ENCODE measurements at regions of chr1 and their contacts with region 1.

Region 1: DNA sequence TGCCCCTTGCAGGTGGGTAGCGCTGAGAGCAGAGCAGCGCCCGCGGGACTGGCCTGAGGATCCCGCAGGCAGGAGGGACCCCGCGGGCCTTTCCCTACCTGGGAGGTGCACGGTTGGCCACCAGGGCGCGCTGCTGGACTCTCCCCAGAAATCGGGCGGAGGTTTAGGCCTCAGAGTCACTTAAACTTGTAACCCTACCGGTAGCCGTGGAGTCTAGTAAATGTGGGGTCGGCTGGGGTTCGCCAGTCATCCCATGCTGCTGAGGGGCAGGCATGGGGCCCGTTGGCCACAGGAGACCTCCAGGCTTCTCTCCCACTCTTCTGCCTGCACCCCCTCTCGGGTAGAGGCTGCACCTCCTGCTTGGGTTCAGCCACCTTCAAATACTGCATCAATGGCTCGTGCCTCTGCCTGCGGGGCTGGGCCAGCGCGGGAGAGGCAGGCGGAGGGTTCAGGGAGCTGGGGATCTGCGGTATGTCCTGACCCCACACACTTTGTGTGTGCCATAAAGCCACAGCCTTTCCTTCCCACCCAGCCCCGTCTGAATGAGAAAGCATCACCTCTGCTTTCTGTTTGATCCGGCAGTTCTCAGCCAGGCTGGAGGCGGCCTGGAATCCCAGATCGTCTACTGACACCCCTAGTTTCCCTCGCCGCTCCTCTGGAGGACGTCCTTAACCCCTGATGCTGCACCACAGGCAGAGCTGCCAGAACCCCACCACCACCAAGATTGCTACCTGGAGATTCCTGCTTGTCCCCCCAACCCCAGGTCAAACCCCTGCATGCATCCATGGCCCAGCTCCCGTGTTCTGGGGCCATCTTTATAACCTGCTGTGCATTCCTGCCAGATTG is 12.3 kb upstream of the GSTM4 start:
- DNase-seq: peak; percentile 94
- H3K4me3 Mint-ChIP-seq: no peak overlapping the region
- H3K27ac Mint-ChIP-seq: no peak overlapping the region
- H3K4me1 Mint-ChIP-seq: peaks cover 5% of the 10 kb centered on the region
- H3K27me3 Mint-ChIP-seq: no peaks in the 10 kb centered on the region

Region 2: GRCh38 chr1:108963052-108963686 is 680.4 kb before region 1 on chr1 and contains the start of gene CLCC1:
- CTCF ChIA-PET with region 1: no interaction called
- intact Hi-C with region 1: no loop called
- DNase-seq: peak; percentile 96
- H3K4me3 Mint-ChIP-seq: peak within 1 kb of the TSS; percentile 88
- H3K27ac Mint-ChIP-seq: peak within 1 kb of the TSS; percentile 87
- H3K4me1 Mint-ChIP-seq: peaks cover 26% of the 10 kb centered on the region
- H3K27me3 Mint-ChIP-seq: no peaks in the 10 kb centered on the region
- total RNA-seq, gene CLCC1: 14.3 to 15.2 TPM

Region 3: DNA sequence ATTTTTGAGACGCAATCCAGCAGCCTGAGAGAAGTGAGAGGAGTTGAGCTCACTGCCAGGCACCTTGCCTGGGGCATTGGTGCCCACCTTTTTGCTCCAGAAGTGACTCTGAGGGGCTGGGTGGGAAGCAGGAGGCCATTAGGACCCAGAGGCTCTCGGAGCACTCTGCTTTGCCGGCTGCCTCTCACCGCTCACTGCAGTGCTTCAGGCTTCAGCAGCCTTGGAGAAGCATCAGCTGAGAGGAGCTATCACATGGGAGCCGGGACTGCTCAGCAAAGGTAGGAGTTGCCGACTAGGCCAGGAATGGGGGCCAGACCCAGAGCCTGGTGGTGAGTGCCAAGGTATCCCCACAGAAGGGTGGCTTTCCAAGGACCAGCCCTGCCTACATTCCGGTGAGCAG is 103.9 kb before region 1 on chr1 and contains the start of gene GPR61:
- CTCF ChIA-PET with region 1: interaction called, 115 read pairs
- intact Hi-C with region 1: no loop called
- DNase-seq: no peak
- H3K4me3 Mint-ChIP-seq: no peak within 1 kb of the TSS
- H3K27ac Mint-ChIP-seq: no peak within 1 kb of the TSS
- H3K4me1 Mint-ChIP-seq: no peaks in the 10 kb centered on the region
- H3K27me3 Mint-ChIP-seq: no peaks in the 10 kb centered on the region
- total RNA-seq, gene GPR61: 0.31 TPM in 1 of 2 experiments, not detected in the other

Region 4: GRCh38 chr1:109620841-109621286 is 22.7 kb before region 1 on chr1:
- CTCF ChIA-PET with region 1: interaction called, 27 read pairs
- intact Hi-C with region 1: no loop called
- DNase-seq: peak; percentile 98
- H3K4me3 Mint-ChIP-seq: peak overlapping the region; percentile 93
- H3K27ac Mint-ChIP-seq: peak overlapping the region; percentile 91
- H3K4me1 Mint-ChIP-seq: peaks cover 57% of the 10 kb centered on the region
- H3K27me3 Mint-ChIP-seq: no peaks in the 10 kb centered on the region

Region 5: DNA sequence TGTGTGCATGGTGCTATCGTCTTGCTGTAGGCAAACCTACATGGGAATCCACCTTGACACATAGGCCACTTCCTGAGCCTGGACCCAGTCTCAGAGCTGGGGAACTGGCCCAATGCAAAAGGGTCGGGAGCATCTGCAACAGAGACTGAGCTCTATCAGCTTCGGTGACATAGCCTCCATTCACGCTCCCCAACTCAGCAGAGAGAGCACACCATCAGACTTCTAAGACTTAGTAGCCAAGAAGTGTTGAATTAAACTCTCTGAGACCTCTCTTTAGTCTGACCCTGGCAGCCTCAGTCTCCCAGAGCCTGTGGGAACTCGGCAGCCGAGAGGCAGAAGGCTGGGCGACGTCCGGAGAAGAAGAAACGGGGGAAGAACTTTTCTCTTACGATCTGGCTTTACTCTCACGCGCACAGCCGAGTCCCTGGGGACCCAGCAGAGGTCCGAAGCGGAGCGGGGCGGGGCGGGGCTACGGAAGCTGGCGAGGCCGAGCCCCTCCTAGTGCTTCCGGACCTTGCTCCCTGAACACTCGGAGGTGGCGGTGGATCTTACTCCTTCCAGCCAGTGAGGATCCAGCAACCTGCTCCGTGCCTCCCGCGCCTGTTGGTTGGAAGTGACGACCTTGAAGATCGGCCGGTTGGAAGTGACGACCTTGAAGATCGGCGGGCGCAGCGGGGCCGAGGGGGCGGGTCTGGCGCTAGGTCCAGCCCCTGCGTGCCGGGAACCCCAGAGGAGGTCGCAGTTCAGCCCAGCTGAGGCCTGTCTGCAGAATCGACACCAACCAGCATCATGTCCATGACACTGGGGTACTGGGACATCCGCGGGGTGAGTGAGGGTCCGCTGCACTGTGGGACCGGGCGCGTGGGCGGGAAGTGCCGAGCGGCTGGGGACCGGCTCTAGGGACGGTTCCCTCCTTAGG is 12.3 kb after region 1 on chr1 and contains the start of gene GSTM4:
- CTCF ChIA-PET with region 1: interaction called, 93 read pairs
- intact Hi-C with region 1: no loop called
- DNase-seq: peak; percentile 69
- H3K4me3 Mint-ChIP-seq: peak within 1 kb of the TSS; percentile 82
- H3K27ac Mint-ChIP-seq: peak within 1 kb of the TSS; percentile 28
- H3K4me1 Mint-ChIP-seq: peaks cover 15% of the 10 kb centered on the region
- H3K27me3 Mint-ChIP-seq: peaks cover 10% of the 10 kb centered on the region
- total RNA-seq, gene GSTM4: 8.8 to 9.9 TPM

Region 6: GRCh38 chr1:109718491-109718890 is 74.9 kb after region 1 on chr1:
- CTCF ChIA-PET with region 1: interaction called, 15 read pairs
- intact Hi-C with region 1: no loop called
- DNase-seq: no peak
- H3K4me3 Mint-ChIP-seq: no peak overlapping the region
- H3K27ac Mint-ChIP-seq: no peak overlapping the region
- H3K4me1 Mint-ChIP-seq: no peaks in the 10 kb centered on the region
- H3K27me3 Mint-ChIP-seq: peaks cover 12% of the 10 kb centered on the region

Region 7: GRCh38 chr1:109790735-109791494 is 147.3 kb after region 1 on chr1:
- CTCF ChIA-PET with region 1: interaction called, 11 read pairs
- intact Hi-C with region 1: no loop called
- DNase-seq: peak; percentile 91
- H3K4me3 Mint-ChIP-seq: no peak overlapping the region
- H3K27ac Mint-ChIP-seq: peak overlapping the region; percentile 81
- H3K4me1 Mint-ChIP-seq: peaks cover 57% of the 10 kb centered on the region
- H3K27me3 Mint-ChIP-seq: no peaks in the 10 kb centered on the region

Measured in activated naive CD4-positive, alpha-beta T cell treated with anti-CD3 and anti-CD28 coated beads for 36 hours (primary cell).